Activated CD4-positive, alpha-beta T cell treated with anti-CD3 and anti-CD28 coated beads, Interleukin-2, amount 10 ng/mL, durations not matched to agents 24 days and 14 days (primary cell): ENCODE measurements at regions of chrX and their contacts with region 1.

Region 1: DNA sequence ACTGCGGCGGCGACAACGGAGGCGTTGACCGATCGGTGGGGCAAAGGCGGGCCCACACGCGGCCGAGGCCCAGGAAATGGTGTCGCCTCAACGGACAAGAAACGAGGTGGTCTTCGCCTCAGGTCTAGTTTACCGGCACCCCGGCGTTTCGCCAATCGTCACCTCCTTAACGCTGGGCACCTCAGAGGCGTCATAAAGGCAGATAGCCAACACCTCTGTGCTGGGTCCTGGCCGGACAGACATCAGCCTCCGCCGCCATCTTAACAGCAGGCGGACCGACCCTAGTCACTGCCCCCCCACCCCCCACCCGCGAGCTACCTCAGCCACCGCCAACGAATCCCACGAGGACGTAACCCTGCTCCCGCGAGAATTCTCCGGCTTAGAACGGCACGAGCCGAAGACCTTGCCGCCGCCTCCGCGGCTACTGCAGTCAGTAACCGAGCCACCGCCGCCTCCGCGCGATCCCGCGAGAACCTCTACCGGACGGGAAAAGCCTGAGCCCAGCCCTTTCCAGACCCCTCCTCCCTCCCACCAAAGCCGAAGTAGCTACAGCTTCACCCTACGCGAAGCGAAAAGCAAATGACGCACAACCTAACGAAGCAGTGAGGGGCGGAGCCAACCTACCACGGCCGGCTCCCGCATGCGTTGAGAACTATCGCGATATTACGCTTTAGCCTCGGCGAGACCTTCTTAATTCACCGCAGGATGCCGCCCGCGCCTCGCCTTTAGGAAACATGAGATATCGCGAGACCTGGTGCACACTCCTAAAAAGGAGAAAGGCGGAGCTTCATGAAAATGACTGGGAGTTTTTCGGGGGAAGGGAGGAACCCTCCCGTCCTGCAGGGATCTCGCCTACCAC is 2.7 kb downstream of the HUWE1 start:
- DNase-seq: peak; percentile 96
- H3K4me3 Mint-ChIP-seq: peak overlapping the region; percentile 97
- H3K27ac Mint-ChIP-seq: peak overlapping the region; percentile 97
- H3K4me1 Mint-ChIP-seq: peaks cover 20% of the 10 kb centered on the region
- H3K27me3 Mint-ChIP-seq: no peaks in the 10 kb centered on the region

Region 2: GRCh38 chrX:53714580-53715345 is 31.0 kb after region 1 on chrX:
- intact Hi-C with region 1: loop called (anchors 1 kb)
- DNase-seq: peak; percentile 91
- H3K4me3 Mint-ChIP-seq: peak overlapping the region; percentile 85
- H3K27ac Mint-ChIP-seq: peak overlapping the region; percentile 99
- H3K4me1 Mint-ChIP-seq: peaks cover 41% of the 10 kb centered on the region
- H3K27me3 Mint-ChIP-seq: no peaks in the 10 kb centered on the region

Region 3: GRCh38 chrX:53831662-53832635 is 148.2 kb after region 1 on chrX:
- intact Hi-C with region 1: loop called (anchors 2 kb)
- DNase-seq: peak; percentile 85
- H3K4me3 Mint-ChIP-seq: peak overlapping the region; percentile 64
- H3K27ac Mint-ChIP-seq: peak overlapping the region; percentile 62
- H3K4me1 Mint-ChIP-seq: peaks cover 10% of the 10 kb centered on the region
- H3K27me3 Mint-ChIP-seq: no peaks in the 10 kb centered on the region

Region 4: GRCh38 chrX:54044126-54044876 is 360.5 kb after region 1 on chrX and contains the start of gene PHF8:
- intact Hi-C with region 1: loop called (anchors 1 kb)
- DNase-seq: peak; percentile 98
- H3K4me3 Mint-ChIP-seq: peak within 1 kb of the TSS; percentile 93
- H3K27ac Mint-ChIP-seq: peak within 1 kb of the TSS; percentile 98
- H3K4me1 Mint-ChIP-seq: peaks cover 16% of the 10 kb centered on the region
- H3K27me3 Mint-ChIP-seq: no peaks in the 10 kb centered on the region
- total RNA-seq, gene PHF8: 50.7 and 53.4 TPM in 2 replicates

Region 5: DNA sequence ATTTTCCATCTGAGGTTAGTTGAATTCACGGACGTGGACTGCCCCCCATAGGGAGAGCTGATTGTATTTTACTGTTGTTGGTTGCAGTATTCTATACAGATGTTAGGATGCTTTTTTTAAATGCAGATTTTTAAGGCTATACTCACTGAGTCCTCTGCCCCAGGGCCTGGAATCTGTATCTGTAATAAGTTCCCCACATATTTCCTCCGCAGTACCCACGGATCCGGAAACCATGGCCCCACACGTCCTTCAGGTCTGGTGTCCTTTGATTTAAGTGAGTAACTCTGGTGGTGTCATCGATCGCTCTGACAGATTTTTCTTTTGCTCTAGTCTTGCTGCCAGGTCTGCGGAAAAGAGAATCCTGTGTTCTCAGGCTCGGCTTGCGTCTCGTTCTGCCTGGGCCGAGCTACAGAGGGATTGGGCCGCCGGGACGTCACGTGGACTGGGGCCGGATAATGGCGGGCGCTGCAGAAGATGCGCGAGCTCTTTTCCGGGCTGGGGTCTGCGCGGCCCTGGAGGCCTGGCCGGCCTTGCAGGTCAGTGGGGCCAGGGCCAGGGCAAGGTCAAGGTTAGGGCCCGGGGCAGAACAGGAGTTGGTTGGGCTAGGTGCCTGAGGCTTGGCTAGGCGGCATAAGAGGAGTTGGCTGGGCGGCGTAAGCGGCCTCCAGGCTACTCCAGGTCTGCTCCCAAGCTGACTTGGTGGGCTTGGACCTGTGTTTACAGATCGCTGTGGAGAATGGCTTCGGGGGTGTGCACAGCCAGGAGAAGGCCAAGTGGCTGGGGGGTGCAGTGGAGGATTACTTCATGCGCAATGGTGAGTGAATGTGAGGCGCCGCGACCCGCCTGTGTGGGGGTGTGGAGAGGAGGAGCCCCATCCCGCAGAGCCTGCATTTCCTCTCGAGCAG is 756.4 kb after region 1 on chrX and contains the start of gene TSR2:
- intact Hi-C with region 1: loop called (anchors 2 kb)
- DNase-seq: peak; percentile 93
- H3K4me3 Mint-ChIP-seq: peak within 1 kb of the TSS; percentile 96
- H3K27ac Mint-ChIP-seq: peak within 1 kb of the TSS; percentile 92
- H3K4me1 Mint-ChIP-seq: peaks cover 14% of the 10 kb centered on the region
- H3K27me3 Mint-ChIP-seq: no peaks in the 10 kb centered on the region
- total RNA-seq, gene TSR2: 40.8 and 43.7 TPM in 2 replicates